PC-3 (cell line): ENCODE measurements at regions of chr1 and their contacts with region 1.

Region 1: GRCh38 chr1:228664399-228664914 is 70.8 kb upstream of the RHOU start:
- DNase-seq: peak; percentile 92
- ATAC-seq: peak; percentile 64
- H3K4me3 ChIP-seq: peak overlapping the region; percentile 40
- H3K27ac ChIP-seq: no peak overlapping the region
- H3K4me1 ChIP-seq: peaks cover 4% of the 10 kb centered on the region; the same call in 1 of the 2 replicates
- H3K27me3 ChIP-seq: no peaks in the 10 kb centered on the region
- CTCF ChIP-seq: peak; percentile 89

Region 2: DNA sequence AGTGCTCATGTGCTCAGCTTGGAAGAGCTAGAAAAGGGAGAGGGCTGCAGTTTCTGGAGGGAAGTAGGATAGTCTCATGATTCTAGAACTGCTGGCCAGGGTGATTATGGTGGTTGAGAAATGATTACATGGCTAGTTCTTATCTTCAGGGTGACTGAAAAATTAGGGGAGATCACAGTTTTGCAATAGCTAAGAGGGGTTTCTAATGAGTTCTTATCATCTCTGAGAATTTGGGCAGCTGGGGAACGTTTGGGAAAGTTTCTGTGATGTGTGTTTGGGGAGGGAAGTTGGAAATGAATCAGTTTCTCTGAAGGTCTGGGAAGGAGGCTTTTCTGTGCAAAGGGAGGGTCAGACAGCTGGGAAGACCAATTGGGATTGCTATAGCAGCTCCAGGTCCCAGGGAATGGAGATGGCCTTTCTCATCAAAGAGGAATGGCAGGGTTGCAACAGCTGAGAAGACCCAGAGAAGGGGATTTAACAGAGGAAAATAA is 63.3 kb after region 1 on chr1:
- CTCF ChIA-PET with region 1: no interaction called
- POLR2A ChIA-PET with region 1: interaction called, 15 read pairs
- intact Hi-C with region 1: no loop called
- DNase-seq: no peak
- ATAC-seq: peak; percentile 11; the same call in 1 of the 2 replicates
- H3K4me3 ChIP-seq: no peak overlapping the region
- H3K27ac ChIP-seq: no peak overlapping the region
- H3K4me1 ChIP-seq: no peaks in the 10 kb centered on the region
- H3K27me3 ChIP-seq: peaks cover 50% of the 10 kb centered on the region
- CTCF ChIP-seq: no peak

Region 3: DNA sequence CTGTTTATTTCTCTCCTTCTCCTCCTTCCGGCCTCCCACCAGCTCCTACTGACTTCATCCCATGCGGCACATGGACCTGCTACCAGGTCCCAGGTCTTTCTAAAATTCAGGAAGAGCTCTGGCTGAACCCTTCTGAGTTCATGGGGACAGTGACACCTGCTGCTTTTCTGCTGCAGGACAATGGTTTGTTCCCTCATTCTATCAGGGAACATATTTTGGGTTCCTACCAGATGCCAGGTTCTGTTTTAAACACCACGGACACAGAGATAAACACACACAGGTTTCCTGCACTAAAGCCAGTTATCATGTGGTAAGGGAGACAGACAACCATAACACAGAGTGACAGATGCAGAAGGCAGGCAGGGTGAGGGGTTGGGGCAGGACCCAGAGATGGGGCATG is 492.4 kb after region 1 on chr1:
- CTCF ChIA-PET with region 1: no interaction called
- POLR2A ChIA-PET with region 1: no interaction called
- intact Hi-C with region 1: loop called (anchors 1 kb)
- DNase-seq: peak; percentile 49
- ATAC-seq: no peak; the same call in 1 of the 2 replicates
- H3K4me3 ChIP-seq: no peak overlapping the region
- H3K27ac ChIP-seq: no peak overlapping the region
- H3K4me1 ChIP-seq: no peaks in the 10 kb centered on the region
- H3K27me3 ChIP-seq: peaks cover 65% of the 10 kb centered on the region
- CTCF ChIP-seq: peak; percentile 57

Region 4: GRCh38 chr1:229514578-229515275 is 850.3 kb after region 1 on chr1:
- CTCF ChIA-PET with region 1: no interaction called
- POLR2A ChIA-PET with region 1: no interaction called
- intact Hi-C with region 1: loop called (anchors 1 kb)
- DNase-seq: peak; percentile 82
- ATAC-seq: peak; percentile 99
- H3K4me3 ChIP-seq: no peak overlapping the region
- H3K27ac ChIP-seq: no peak overlapping the region
- H3K4me1 ChIP-seq: peaks cover 6% of the 10 kb centered on the region
- H3K27me3 ChIP-seq: no peaks in the 10 kb centered on the region
- CTCF ChIP-seq: peak; percentile 91